ENCODE measurements at regions of chrX and their contacts with region 1.

Region 1: DNA sequence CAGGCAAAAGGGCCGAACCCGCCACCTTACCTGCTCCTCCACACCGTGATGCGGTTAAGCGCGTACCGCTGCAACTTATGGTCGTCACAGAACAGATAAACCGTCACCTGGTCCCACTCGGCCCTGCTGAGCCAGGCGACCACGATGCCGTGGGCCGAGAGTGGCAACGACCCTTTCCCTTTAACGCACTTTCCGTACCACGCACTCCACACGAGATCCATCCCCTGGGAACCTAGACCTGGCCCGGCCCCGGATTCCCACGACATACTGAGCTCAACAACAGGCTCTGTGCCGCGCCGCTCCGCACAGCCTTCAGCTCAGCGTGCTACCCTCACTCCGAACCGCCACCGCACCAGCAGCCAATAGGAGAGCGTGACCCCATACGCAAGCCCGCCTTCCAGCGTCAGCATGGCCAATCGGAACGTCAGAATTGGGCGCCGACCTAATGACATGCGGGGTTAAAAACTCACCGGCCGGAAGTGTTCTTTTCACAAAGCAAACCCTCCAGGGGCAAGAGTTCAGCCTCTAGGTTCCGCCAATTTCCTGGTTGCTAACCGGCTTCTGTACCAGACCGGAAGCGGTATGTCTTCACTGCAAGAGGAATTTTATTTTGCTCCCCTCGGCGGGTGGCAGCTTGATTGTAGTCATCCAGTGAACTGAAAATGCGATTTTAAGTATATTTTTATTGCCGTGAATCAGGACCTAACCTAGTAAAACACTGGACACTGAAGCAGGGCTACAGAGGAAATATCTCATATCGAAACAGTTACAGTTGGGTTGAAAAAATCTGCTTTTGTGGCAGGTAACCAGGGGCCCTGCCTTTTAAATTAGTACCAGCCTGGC is at the start of gene LAS1L:
- DNase-seq: peak; percentile 92
- H3K4me3 ChIP-seq: peak within 1 kb of the TSS; percentile 64 to 89 (median 86)
- H3K27ac ChIP-seq: peak within 1 kb of the TSS; percentile 47
- H3K4me1 ChIP-seq: peaks cover 9% of the 10 kb centered on the region
- H3K27me3 ChIP-seq: no peaks in the 10 kb centered on the region
- CTCF ChIP-seq: no peak
- POLR2A ChIP-seq: no peak
- total RNA-seq, gene LAS1L: 34.2 and 39.6 TPM in 2 replicates

Region 2: GRCh38 chrX:65093658-65094057 is 441.0 kb before region 1 on chrX:
- CTCF ChIA-PET with region 1: no interaction called
- POLR2A ChIA-PET with region 1: no interaction called
- dilution Hi-C with region 1: no loop called
- intact Hi-C with region 1: no loop called
- DNase-seq: no peak
- H3K4me3 ChIP-seq: no peak overlapping the region
- H3K27ac ChIP-seq: no peak overlapping the region
- H3K4me1 ChIP-seq: no peaks in the 10 kb centered on the region
- H3K27me3 ChIP-seq: no peaks in the 10 kb centered on the region
- CTCF ChIP-seq: no peak
- POLR2A ChIP-seq: no peak

Region 3: DNA sequence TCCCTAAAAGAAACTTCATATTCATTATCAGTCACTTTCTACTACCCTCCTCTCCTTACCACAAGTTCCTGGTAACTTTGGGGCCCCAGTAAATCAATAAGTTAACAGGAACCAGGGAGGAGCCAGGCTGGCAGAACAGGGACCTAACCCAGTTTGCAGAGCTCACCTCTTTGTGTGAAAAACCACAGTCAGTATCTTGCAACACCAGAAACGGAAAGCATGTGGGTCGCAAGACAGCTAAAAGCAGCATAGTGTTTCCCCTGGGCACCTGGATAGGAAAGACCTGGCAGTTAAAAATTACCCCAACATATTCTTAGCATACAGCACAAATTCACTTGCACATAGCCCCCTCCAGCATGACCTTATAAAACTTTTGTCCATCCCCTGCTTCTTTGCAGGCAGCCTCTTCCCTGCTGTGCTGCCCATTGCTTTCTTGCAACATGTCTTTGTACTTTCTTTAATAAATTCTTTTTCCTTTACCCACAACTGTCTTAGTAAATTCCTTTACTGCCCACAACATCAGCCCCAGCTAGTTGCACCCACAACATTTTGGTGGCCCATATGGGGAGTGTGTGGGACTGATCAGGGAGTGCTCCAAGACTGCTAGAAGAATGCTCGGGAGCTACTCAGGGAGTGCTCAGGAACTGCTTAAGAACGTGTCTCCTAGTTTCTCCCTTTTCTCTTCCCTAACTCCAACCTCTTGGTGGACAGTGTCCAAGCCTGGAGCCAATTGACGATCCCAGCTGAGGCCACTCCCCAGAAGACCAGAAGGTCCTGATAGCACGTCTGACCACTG is 216.2 kb after region 1 on chrX:
- CTCF ChIA-PET with region 1: no interaction called
- POLR2A ChIA-PET with region 1: interaction called, 10 read pairs
- dilution Hi-C with region 1: no loop called
- intact Hi-C with region 1: no loop called
- DNase-seq: no peak
- H3K4me3 ChIP-seq: no peak overlapping the region
- H3K27ac ChIP-seq: no peak overlapping the region
- H3K4me1 ChIP-seq: no peaks in the 10 kb centered on the region
- H3K27me3 ChIP-seq: no peaks in the 10 kb centered on the region
- CTCF ChIP-seq: no peak
- POLR2A ChIP-seq: no peak

Region 4: GRCh38 chrX:66015152-66015831 is 480.6 kb after region 1 on chrX:
- CTCF ChIA-PET with region 1: no interaction called
- POLR2A ChIA-PET with region 1: no interaction called
- dilution Hi-C with region 1: no loop called
- intact Hi-C with region 1: no loop called
- DNase-seq: no peak
- H3K4me3 ChIP-seq: no peak overlapping the region
- H3K27ac ChIP-seq: no peak overlapping the region
- H3K4me1 ChIP-seq: no peaks in the 10 kb centered on the region
- H3K27me3 ChIP-seq: no peaks in the 10 kb centered on the region
- CTCF ChIP-seq: no peak
- POLR2A ChIP-seq: no peak